Activated CD4-positive, alpha-beta memory T cell treated with anti-CD3 and anti-CD28 coated beads for 36 hours (primary cell): ENCODE measurements at regions of chr21 and their contacts with region 1.

Region 1: DNA sequence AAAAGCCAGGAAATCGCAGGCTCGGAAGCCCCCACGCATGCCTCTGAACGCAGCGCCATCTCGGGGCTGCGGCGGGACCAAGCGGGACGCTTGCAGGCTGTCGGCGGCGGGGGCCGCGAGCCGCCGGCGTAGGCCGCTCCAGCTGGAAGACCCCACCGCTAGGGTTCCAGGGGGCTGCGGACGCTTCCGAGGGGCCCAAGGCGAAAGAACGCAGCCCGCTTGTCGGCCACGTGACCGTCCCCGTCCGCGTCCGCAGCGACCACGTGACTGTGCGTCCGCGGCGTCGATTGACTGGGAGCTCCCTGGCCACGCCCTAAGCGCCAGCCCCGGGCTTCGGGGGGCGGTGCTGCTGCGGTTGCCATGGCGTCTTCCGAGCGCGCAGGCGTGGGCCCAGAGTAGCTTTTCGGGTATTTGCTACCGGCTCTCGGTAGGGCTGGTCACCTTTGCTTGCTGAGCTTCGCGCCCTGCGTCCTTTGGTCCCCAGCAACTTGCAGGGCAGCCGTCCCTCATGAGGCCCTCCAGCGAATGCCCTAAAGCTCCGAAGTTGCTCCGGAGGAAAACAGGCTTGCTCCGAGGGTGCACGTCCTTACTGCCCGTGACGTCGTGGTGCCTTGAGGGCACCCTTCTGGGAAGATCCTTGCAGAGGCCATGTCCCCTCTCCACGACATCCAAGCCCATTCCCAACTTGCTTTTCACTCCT is 197.2 kb downstream of the DYRK1A start:
- DNase-seq: peak; percentile 94
- H3K4me3 Mint-ChIP-seq: peak overlapping the region; percentile 93
- H3K27ac Mint-ChIP-seq: peak overlapping the region; percentile 100
- H3K4me1 Mint-ChIP-seq: peaks cover 25% of the 10 kb centered on the region
- H3K27me3 Mint-ChIP-seq: no peaks in the 10 kb centered on the region

Region 2: DNA sequence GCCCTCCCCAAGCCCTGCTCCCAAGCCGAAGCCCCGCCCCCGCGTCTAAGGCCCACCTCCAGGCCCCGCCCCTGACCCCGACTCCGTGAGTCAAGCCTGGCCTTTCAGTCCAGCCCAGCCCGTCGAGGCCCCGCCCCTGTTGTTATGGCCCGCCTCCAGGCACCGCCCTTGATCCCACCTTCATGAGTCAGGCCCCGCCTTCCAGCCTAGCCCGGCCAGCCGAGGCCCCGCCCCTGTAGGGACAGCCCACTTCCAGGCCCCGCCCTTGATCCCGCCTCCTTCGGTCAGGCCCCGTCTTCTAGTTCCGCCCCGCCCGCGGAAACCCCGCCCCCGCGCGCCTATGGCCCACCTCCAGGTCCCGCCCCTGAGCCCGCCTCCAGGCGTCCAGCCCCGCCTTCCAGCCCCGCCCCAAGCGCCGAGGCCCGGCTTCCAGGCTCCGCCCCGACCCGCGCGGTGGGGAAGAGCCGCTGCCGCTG is 1407.4 kb before region 1 on chr21:
- CTCF ChIA-PET with region 1: no interaction called
- POLR2A ChIA-PET with region 1: no interaction called
- intact Hi-C with region 1: loop called (anchors 2 kb)
- DNase-seq: peak; percentile 100
- H3K4me3 Mint-ChIP-seq: peak overlapping the region; percentile 82
- H3K27ac Mint-ChIP-seq: no peak overlapping the region
- H3K4me1 Mint-ChIP-seq: peaks cover 25% of the 10 kb centered on the region
- H3K27me3 Mint-ChIP-seq: no peaks in the 10 kb centered on the region

Region 3: GRCh38 chr21:37220981-37221664 is 342.7 kb before region 1 on chr21:
- CTCF ChIA-PET with region 1: interaction called, 5 read pairs
- POLR2A ChIA-PET with region 1: interaction called, 6 read pairs
- intact Hi-C with region 1: loop called (anchors 10 kb)
- DNase-seq: peak; percentile 97
- H3K4me3 Mint-ChIP-seq: peak overlapping the region; percentile 86
- H3K27ac Mint-ChIP-seq: peak overlapping the region; percentile 96
- H3K4me1 Mint-ChIP-seq: peaks cover 36% of the 10 kb centered on the region
- H3K27me3 Mint-ChIP-seq: no peaks in the 10 kb centered on the region

Region 4: GRCh38 chr21:37366482-37367316 is 197.1 kb before region 1 on chr21 and contains the start of gene DYRK1A:
- CTCF ChIA-PET with region 1: interaction called, 7 read pairs
- POLR2A ChIA-PET with region 1: interaction called, 18 read pairs
- intact Hi-C with region 1: loop called (anchors 2 kb)
- DNase-seq: peak; percentile 99
- H3K4me3 Mint-ChIP-seq: peak within 1 kb of the TSS; percentile 98
- H3K27ac Mint-ChIP-seq: peak within 1 kb of the TSS; percentile 99
- H3K4me1 Mint-ChIP-seq: peaks cover 34% of the 10 kb centered on the region
- H3K27me3 Mint-ChIP-seq: no peaks in the 10 kb centered on the region
- total RNA-seq, gene DYRK1A: 47.6 to 51.1 TPM

Region 5: DNA sequence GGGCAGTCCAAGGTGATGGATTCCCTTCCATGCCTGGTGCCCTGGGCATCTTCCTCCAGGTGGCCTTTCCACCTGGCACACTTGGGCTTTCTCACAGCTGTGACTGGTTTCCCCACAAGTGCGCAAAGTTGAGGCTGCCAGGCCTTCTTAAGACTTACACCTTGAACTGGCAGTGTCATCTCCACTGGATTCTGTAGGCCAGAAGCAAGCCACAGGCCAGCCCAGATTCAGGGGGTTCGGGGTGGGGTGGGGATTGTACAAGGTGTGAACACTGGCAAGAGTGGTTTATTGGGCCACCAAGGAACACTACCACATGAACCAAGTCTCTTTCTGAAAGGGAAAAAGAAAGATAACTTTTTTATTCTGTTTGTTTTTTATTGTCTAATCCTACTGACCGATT is 170.0 kb before region 1 on chr21:
- CTCF ChIA-PET with region 1: no interaction called
- POLR2A ChIA-PET with region 1: no interaction called
- intact Hi-C with region 1: no loop called
- DNase-seq: no peak
- H3K4me3 Mint-ChIP-seq: no peak overlapping the region
- H3K27ac Mint-ChIP-seq: no peak overlapping the region
- H3K4me1 Mint-ChIP-seq: peaks cover 79% of the 10 kb centered on the region
- H3K27me3 Mint-ChIP-seq: no peaks in the 10 kb centered on the region

Region 6: DNA sequence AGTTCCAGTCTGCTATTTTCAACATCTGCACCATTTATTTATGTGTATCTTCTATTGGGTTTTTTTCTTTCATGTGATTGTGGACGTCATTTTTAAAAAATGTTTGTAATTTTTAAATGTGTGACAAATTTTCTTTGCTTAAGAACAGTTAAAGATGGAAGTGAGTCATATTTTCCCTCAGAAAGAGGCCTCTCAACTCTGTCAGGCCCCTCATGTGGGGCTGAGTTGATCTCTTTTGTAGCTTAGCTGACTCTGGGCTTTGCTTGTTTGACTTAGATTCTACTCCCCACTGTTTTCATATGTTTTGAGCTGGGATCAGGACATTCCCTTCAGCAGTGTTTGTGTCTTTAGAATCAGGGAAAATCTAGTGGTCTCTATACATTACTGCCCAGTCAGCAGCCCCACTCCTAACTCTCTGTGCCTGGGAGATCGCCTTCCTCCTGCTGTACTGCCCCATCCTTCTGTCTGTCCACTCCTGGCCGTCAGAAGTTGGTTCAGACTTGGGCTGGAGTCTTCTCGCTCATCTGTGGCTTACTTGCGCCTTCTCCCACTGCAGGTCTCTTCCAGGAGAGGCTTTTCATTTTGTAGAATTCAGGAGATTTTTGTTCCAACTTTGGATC is 59.8 kb before region 1 on chr21:
- CTCF ChIA-PET with region 1: interaction called, 3 read pairs
- POLR2A ChIA-PET with region 1: interaction called, 3 read pairs
- intact Hi-C with region 1: loop called (anchors 5 kb)
- DNase-seq: peak; percentile 31
- H3K4me3 Mint-ChIP-seq: no peak overlapping the region
- H3K27ac Mint-ChIP-seq: peak overlapping the region; percentile 80
- H3K4me1 Mint-ChIP-seq: peaks cover 21% of the 10 kb centered on the region
- H3K27me3 Mint-ChIP-seq: no peaks in the 10 kb centered on the region

Region 7: GRCh38 chr21:37575580-37575979 is 11.8 kb after region 1 on chr21:
- CTCF ChIA-PET with region 1: interaction called, 15 read pairs
- POLR2A ChIA-PET with region 1: no interaction called
- intact Hi-C with region 1: no loop called
- DNase-seq: no peak
- H3K4me3 Mint-ChIP-seq: no peak overlapping the region
- H3K27ac Mint-ChIP-seq: no peak overlapping the region
- H3K4me1 Mint-ChIP-seq: no peaks in the 10 kb centered on the region
- H3K27me3 Mint-ChIP-seq: peaks cover 4% of the 10 kb centered on the region

Region 8: GRCh38 chr21:37593015-37593414 is 29.2 kb after region 1 on chr21:
- CTCF ChIA-PET with region 1: no interaction called
- POLR2A ChIA-PET with region 1: no interaction called
- intact Hi-C with region 1: no loop called
- DNase-seq: no peak
- H3K4me3 Mint-ChIP-seq: no peak overlapping the region
- H3K27ac Mint-ChIP-seq: no peak overlapping the region
- H3K4me1 Mint-ChIP-seq: no peaks in the 10 kb centered on the region
- H3K27me3 Mint-ChIP-seq: peaks cover 3% of the 10 kb centered on the region

Region 9: GRCh38 chr21:37783016-37783415 is 219.2 kb after region 1 on chr21:
- CTCF ChIA-PET with region 1: no interaction called
- POLR2A ChIA-PET with region 1: no interaction called
- intact Hi-C with region 1: no loop called
- DNase-seq: no peak
- H3K4me3 Mint-ChIP-seq: no peak overlapping the region
- H3K27ac Mint-ChIP-seq: no peak overlapping the region
- H3K4me1 Mint-ChIP-seq: no peaks in the 10 kb centered on the region
- H3K27me3 Mint-ChIP-seq: peaks cover 12% of the 10 kb centered on the region

Region 10: DNA sequence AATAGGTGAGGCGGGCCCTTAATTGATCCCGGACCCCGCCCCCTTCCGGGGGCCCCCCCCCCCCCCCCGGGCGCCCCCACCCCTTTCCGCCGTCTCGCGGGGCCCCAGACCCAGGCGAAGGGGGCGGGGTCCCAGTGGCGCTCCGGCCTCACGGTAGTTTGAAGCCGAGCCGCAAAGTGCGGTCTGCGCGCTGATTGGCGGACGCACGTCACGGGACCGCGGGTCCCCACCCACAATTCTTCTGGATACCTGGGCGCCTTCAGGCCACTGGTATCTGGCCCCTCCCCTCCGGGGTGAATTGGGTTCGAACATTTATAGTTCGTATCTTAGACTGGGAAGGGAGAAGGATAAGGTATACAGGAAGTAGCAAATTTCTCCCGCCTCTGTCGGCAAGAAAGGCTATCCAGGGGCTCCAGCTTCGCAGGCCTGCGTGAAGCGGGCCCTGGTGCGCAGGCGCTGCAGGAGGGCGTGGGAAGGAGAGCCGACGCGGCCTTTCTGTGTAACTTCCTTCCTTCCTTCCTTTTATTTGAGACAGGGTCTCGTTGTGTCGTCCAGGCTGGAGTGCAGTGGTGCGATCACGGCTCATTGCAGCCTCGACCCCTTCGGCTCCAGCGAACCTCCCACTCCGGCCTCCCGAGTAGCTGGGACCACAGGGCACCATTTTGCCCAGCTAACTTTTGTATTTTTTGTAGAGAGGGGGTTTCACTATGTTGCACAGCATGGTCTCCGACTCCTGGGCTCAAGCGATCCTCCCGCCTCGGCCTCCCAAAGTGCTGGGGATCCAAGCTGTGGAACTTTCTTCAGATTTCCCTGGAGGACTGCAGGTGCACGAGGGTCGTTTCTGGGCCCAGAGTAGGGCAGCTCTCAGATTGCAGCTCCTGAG is 1785.7 kb after region 1 on chr21:
- CTCF ChIA-PET with region 1: no interaction called
- POLR2A ChIA-PET with region 1: no interaction called
- intact Hi-C with region 1: loop called (anchors 10 kb)
- DNase-seq: peak; percentile 98
- H3K4me3 Mint-ChIP-seq: peak overlapping the region; percentile 98
- H3K27ac Mint-ChIP-seq: peak overlapping the region; percentile 100
- H3K4me1 Mint-ChIP-seq: peaks cover 31% of the 10 kb centered on the region
- H3K27me3 Mint-ChIP-seq: peaks cover 2% of the 10 kb centered on the region